ENCODE measurements at regions of chr4 and their contacts with region 1.

Region 1: GRCh38 chr4:41887821-41888686 is 47.2 kb upstream of the TMEM33 start:
- DNase-seq: peak; percentile 55
- H3K4me3 ChIP-seq: no peak overlapping the region
- H3K27ac ChIP-seq: no peak overlapping the region
- H3K4me1 ChIP-seq: no peaks in the 10 kb centered on the region
- H3K27me3 ChIP-seq: peaks cover 32 to 69% of the 10 kb centered on the region in 2 experiments
- CTCF ChIP-seq: peak; percentile 58
- POLR2A ChIP-seq: no peak

Region 2: GRCh38 chr4:41257257-41257901 is 630.7 kb before region 1 on chr4:
- CTCF ChIA-PET with region 1: interaction called, 11 read pairs
- POLR2A ChIA-PET with region 1: no interaction called
- dilution Hi-C with region 1: no loop called
- intact Hi-C with region 1: no loop called
- DNase-seq: peak; percentile 36
- H3K4me3 ChIP-seq: peak overlapping the region; percentile 35 to 54 (median 48)
- H3K27ac ChIP-seq: peak overlapping the region; percentile 0
- H3K4me1 ChIP-seq: peaks cover 12% of the 10 kb centered on the region
- H3K27me3 ChIP-seq: peaks cover 14 to 15% of the 10 kb centered on the region in 2 experiments
- CTCF ChIP-seq: no peak
- POLR2A ChIP-seq: no peak

Region 3: DNA sequence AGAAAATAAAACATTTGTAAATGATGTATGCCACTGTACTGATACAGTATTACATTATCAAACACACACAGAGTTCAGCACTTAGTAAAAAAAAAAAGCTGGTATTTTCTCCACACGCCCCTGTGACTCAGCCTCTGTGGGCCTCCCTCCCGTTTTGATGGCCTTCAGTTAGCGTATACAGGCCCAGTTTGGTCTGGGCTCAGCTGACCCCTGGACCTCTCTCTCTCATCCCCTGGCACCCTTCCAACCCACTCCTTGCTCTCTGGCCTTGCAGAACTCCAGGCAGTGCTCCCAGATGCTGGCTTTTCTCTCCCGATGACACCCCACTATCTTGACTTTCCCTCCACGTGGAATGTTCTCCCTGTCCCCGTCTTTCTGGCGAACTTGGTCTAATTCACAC is 439.1 kb before region 1 on chr4:
- CTCF ChIA-PET with region 1: no interaction called
- POLR2A ChIA-PET with region 1: no interaction called
- dilution Hi-C with region 1: no loop called
- intact Hi-C with region 1: no loop called
- DNase-seq: no peak
- H3K4me3 ChIP-seq: no peak overlapping the region
- H3K27ac ChIP-seq: no peak overlapping the region
- H3K4me1 ChIP-seq: no peaks in the 10 kb centered on the region
- H3K27me3 ChIP-seq: peaks cover 24 to 29% of the 10 kb centered on the region in 2 experiments
- CTCF ChIP-seq: no peak
- POLR2A ChIP-seq: no peak

Region 4: GRCh38 chr4:41701961-41702360 is 186.1 kb before region 1 on chr4:
- CTCF ChIA-PET with region 1: interaction called, 16 read pairs
- POLR2A ChIA-PET with region 1: no interaction called
- dilution Hi-C with region 1: no loop called
- intact Hi-C with region 1: no loop called
- DNase-seq: no peak
- H3K4me3 ChIP-seq: no peak overlapping the region
- H3K27ac ChIP-seq: no peak overlapping the region
- H3K4me1 ChIP-seq: no peaks in the 10 kb centered on the region
- H3K27me3 ChIP-seq: peaks cover 9 to 22% of the 10 kb centered on the region in 2 experiments
- CTCF ChIP-seq: no peak
- POLR2A ChIP-seq: no peak

Region 5: GRCh38 chr4:41806807-41807206 is 81.2 kb before region 1 on chr4:
- CTCF ChIA-PET with region 1: no interaction called
- POLR2A ChIA-PET with region 1: no interaction called
- dilution Hi-C with region 1: no loop called
- intact Hi-C with region 1: no loop called
- DNase-seq: no peak
- H3K4me3 ChIP-seq: no peak overlapping the region
- H3K27ac ChIP-seq: no peak overlapping the region
- H3K4me1 ChIP-seq: no peaks in the 10 kb centered on the region
- H3K27me3 ChIP-seq: peaks cover 8 to 9% of the 10 kb centered on the region in 2 experiments
- CTCF ChIP-seq: no peak
- POLR2A ChIP-seq: no peak

Region 6: GRCh38 chr4:41913509-41913908 is 25.5 kb after region 1 on chr4:
- CTCF ChIA-PET with region 1: interaction called, 10 read pairs
- POLR2A ChIA-PET with region 1: no interaction called
- dilution Hi-C with region 1: no loop called
- intact Hi-C with region 1: no loop called
- DNase-seq: no peak
- H3K4me3 ChIP-seq: no peak overlapping the region
- H3K27ac ChIP-seq: no peak overlapping the region
- H3K4me1 ChIP-seq: no peaks in the 10 kb centered on the region
- H3K27me3 ChIP-seq: peaks cover 0 to 3% of the 10 kb centered on the region in 2 experiments
- CTCF ChIP-seq: no peak
- POLR2A ChIP-seq: no peak

Measured in endothelial cell of umbilical vein (primary cell).